K562 (cell line): ENCODE measurements at regions of chr7 and their contacts with region 1.

Region 1: DNA sequence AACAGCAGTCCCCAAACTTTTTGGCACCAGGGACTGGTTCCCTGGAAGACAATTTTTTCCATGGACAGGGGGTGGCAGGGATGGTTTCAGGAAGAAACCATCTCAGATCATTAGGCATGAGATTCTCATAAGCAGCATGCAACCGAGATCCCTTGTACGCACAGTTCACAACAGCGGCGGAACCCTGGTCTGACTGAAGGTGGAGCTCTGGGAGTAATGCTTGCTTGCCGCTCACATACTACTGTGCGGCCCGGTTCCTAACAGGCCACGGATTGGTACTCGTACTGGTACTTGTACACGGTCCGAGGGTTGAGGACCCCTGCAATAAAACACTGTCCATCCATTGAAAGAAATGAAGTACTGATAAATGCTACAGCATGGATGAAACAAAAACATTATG is 32.8 kb downstream of the MKRN1 start:
- DNase-seq: peak in 1 of 4 experiments; percentile 48
- ATAC-seq: peak; percentile 78
- H3K4me3 ChIP-seq: no peak overlapping the region
- H3K27ac ChIP-seq: no peak overlapping the region
- H3K4me1 ChIP-seq: peaks cover 2% of the 10 kb centered on the region in 2 experiments; a peak in 3 of 5 replicates
- H3K27me3 ChIP-seq: no peaks in the 10 kb centered on the region; a peak in 1 of 5 replicates
- CTCF ChIP-seq: peak; percentile 40 to 48 (median 48); a peak in 4 of 6 replicates
- EP300 ChIP-seq: no peak
- POLR2A ChIP-seq: no peak
- RAD21 ChIP-seq: peak in 1 of 2 experiments; percentile 53; a peak in 2 of 4 replicates

Region 2: DNA sequence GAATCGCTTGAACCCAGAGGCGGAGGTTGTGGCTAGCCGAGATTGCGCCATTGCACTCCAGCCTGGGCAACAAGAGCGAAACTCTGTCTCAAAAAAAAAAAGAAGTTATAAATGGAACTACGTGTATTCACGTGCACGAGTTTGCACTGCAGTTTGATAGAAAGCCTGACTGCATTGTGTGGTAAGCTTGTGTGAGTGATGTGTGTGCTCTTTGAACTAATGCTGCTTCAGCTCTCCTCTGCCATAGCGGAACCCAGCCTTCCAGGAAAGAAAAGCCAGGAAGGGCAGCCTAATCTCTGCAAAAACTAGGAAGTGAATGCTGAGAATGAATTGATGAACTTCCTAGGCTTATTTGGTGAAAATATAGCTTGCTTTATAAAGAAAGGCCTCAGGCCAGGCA is 48.4 kb after region 1 on chr7:
- CTCF ChIA-PET with region 1: no interaction called
- POLR2A ChIA-PET with region 1: interaction called, 3 read pairs
- in situ Hi-C with region 1: no loop called
- intact Hi-C with region 1: loop called (anchors 2 kb)
- DNase-seq: no peak
- ATAC-seq: no peak
- H3K4me3 ChIP-seq: no peak overlapping the region
- H3K27ac ChIP-seq: no peak overlapping the region
- H3K4me1 ChIP-seq: peaks cover 4 to 8% of the 10 kb centered on the region in 2 experiments; a peak in 4 of 5 replicates
- H3K27me3 ChIP-seq: no peaks in the 10 kb centered on the region
- CTCF ChIP-seq: no peak
- EP300 ChIP-seq: no peak
- POLR2A ChIP-seq: no peak
- RAD21 ChIP-seq: no peak